GM10248 (cell line): ENCODE measurements at regions of chr11 and their contacts with region 1.

Region 1: DNA sequence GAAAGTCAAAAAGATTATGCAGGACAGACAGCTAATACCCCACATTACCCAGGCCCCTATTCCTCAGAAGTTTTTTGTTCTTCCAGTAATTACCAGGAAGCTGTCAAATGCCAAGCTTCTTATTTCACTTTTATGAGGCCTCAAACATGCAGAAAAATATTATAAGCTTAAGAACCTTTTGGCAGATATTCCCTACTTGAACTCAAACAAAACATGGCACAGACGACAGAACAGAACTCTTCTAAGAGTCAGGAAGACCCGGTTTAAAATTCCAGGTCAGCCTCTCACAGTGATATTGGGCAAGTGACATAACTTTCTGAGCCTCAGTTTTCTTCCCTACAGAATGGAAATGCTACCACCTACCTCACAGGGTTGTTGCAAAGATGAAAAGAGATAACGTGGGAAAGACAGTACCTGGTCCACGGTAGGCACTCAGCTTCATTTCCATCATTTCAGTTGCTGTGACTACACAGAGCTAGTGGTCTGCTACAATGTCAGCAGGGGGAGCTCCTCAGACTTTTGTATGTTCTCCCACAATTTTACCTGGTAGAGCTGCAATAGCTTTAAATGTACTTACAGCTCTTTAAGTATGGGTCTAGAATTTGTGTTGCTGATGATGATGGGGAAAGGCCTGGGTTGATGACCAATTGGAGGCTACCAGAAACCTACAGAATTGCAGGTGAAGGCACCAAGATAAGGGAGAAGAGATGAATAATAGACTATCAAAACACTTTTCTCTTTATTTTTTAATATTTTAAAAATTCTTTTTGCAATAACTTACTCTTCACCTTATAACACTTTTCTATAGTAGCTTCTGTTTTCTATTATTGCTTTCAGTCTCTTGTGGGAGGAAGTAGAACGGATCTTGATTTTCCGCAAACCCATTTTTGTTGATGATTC is 98.3 kb upstream of the CHRM4 start:
- DNase-seq: peak; percentile 55
- CTCF ChIP-seq: peak; percentile 68

Region 2: GRCh38 chr11:46475926-46476545 is 13.9 kb before region 1 on chr11:
- CTCF ChIA-PET with region 1: interaction called, 57 read pairs
- POLR2A ChIA-PET with region 1: interaction called, 4 read pairs
- DNase-seq: no peak
- CTCF ChIP-seq: no peak

Region 3: DNA sequence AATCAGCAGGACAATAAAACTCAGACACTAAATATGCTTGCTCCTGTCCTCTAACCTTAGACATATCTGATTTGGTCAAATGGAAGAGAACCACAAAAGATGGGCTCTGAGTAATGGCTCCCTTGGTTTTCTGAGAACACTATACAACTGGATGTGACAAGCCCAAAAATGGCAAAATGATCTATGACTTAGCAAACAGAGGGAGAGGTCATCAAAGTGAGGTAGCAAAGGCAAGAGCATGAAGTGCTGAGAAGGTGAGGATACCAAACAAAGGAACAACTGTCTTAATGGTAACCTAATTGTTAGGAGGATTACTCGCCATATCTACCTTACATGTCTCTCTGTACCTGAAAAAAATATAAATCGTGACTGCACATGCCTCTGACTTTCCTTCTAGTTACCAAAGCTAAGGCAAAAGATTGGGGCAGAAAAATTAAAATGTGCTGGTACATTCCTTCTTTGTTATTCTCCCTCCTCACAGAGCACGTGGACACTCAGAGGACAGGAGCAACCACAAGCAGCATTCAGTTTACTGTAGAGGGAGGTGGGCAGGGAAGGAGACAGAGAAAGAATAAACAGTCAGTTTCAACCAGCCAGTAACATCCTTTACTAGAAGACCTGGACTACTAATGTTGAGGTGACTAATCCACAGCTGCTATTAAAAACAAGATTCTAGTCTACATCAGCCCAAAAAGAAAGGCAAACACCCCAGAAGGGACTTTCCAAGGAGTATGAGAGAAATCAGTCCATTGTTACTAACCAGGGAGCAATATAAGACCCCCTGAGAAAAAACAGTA is 15.1 kb after region 1 on chr11:
- CTCF ChIA-PET with region 1: interaction called, 51 read pairs
- POLR2A ChIA-PET with region 1: no interaction called
- DNase-seq: peak; percentile 39
- CTCF ChIP-seq: no peak

Region 4: GRCh38 chr11:46514370-46514769 is 24.5 kb after region 1 on chr11:
- CTCF ChIA-PET with region 1: interaction called, 13 read pairs
- POLR2A ChIA-PET with region 1: no interaction called
- DNase-seq: no peak
- CTCF ChIP-seq: no peak

Region 5: GRCh38 chr11:46520971-46521745 is 31.2 kb after region 1 on chr11:
- CTCF ChIA-PET with region 1: interaction called, 13 read pairs
- POLR2A ChIA-PET with region 1: no interaction called
- DNase-seq: no peak
- CTCF ChIP-seq: no peak

Region 6: DNA sequence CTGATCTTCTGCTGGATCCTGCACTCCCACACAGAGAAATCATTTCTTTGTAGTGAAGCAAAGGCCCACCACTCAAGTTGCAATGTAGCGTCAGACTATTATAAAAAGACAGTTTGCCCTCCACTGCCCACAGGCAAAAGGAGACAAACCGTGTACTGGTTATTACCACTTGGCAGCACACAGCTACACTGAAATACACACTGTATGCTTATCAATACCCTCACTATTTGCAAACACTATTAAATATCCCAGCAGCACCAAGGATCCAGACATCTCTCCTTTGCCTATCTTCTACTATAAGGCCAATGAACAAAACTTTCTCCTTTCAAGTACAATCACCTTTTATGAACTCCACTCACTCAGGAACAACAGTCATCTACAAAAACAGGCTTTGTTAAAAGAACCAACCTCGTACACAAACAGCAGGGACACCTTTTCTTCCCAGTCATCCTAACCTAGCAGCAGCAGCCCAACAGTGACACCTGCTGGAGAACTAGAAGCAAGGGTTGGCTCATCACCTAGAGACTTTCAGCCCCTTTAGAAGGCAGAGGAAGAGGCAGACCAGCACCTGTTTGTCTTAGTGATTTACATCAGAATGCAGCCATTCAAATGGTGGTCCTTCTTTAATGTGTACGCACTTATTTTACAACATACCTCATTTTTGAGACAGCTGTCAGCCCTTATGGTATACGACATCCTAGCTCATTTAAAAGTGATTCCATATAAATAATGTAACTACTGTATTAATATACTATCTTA is 47.8 kb after region 1 on chr11:
- CTCF ChIA-PET with region 1: interaction called, 10 read pairs
- POLR2A ChIA-PET with region 1: no interaction called
- DNase-seq: peak; percentile 75
- CTCF ChIP-seq: peak; percentile 82

Region 7: DNA sequence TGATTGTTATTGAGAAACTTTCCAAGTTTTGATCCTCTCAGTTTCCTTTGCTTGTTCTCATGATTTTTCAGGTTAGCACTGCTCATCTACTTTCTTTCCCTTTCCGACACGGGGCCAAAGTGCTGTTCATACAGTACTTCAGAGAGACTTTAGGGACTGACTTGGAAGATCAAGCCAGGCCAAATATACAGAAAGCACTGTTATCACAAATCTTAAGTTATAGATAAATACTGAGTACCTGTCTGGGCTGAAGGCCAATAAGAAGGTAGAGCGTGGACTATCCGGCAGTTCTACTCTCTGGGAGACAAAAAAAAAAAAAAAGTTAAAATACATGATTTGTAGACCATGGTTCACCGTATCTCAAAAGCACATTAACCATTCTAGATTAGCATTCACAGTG is 57.7 kb after region 1 on chr11:
- CTCF ChIA-PET with region 1: interaction called, 13 read pairs
- POLR2A ChIA-PET with region 1: no interaction called
- DNase-seq: no peak
- CTCF ChIP-seq: no peak